Activated CD4-positive, alpha-beta T cell treated with anti-CD3 and anti-CD28 coated beads, Interleukin-2, amount 10 ng/mL, durations not matched to agents 24 days and 14 days (primary cell): ENCODE measurements at regions of chr3 and their contacts with region 1.

Region 1: DNA sequence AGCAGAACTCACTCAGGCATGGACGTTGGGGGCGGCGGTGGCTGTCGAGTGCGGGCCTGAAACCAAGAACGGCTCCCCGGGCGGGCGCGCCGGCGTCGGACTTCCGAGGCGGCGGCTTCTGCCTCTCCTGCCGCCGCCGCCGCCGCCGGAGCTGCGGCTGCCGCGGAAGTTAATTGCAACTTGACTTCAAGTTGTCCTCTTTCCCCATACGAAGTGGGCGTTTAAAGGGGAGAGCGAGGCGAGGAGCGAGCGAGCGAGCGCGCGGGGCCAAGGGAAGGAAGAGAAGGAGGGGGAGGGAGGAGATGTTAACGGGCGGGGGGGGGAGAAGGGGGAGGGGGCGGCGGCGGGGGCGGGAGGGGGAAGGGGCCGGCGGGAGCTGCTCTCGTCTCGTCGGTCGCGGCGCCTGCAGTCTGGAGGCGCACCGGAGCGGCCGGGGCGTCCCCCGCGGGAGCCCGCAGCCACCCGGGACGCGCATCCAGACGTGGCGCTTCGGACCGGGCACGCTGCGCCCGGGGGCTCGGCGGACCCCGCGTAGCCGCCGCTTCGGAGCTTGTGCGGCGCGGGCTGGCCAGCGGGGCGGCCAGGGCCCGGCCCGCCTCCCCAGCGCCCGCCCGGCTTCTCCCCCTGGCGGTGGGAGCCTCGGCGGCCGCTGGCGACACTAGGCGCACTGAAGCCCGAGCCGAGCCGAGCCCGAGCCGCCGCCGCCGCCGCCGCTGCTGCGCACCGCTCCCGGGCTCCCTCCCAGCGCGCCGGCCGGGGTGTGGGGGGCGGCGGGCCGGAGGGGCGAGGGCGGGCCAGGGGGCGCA is 19.7 kb upstream of the SATB1 start:
- DNase-seq: peak; percentile 94
- H3K4me3 Mint-ChIP-seq: peak overlapping the region; percentile 96
- H3K27ac Mint-ChIP-seq: peak overlapping the region; percentile 99
- H3K4me1 Mint-ChIP-seq: peaks cover 27% of the 10 kb centered on the region
- H3K27me3 Mint-ChIP-seq: no peaks in the 10 kb centered on the region

Region 2: GRCh38 chr3:18424729-18425640 is 19.8 kb before region 1 on chr3 and contains the start of gene SATB1:
- intact Hi-C with region 1: loop called (anchors 1 kb)
- DNase-seq: peak; percentile 91
- H3K4me3 Mint-ChIP-seq: peak within 1 kb of the TSS; percentile 83
- H3K27ac Mint-ChIP-seq: peak within 1 kb of the TSS; percentile 98
- H3K4me1 Mint-ChIP-seq: peaks cover 55% of the 10 kb centered on the region
- H3K27me3 Mint-ChIP-seq: peaks cover 2% of the 10 kb centered on the region
- total RNA-seq, gene SATB1: 561 and 571 TPM in 2 replicates

Region 3: GRCh38 chr3:18494251-18494650 is 49.5 kb after region 1 on chr3:
- intact Hi-C with region 1: no loop called
- DNase-seq: no peak
- H3K4me3 Mint-ChIP-seq: no peak overlapping the region
- H3K27ac Mint-ChIP-seq: no peak overlapping the region
- H3K4me1 Mint-ChIP-seq: peaks cover 22% of the 10 kb centered on the region
- H3K27me3 Mint-ChIP-seq: no peaks in the 10 kb centered on the region

Region 4: DNA sequence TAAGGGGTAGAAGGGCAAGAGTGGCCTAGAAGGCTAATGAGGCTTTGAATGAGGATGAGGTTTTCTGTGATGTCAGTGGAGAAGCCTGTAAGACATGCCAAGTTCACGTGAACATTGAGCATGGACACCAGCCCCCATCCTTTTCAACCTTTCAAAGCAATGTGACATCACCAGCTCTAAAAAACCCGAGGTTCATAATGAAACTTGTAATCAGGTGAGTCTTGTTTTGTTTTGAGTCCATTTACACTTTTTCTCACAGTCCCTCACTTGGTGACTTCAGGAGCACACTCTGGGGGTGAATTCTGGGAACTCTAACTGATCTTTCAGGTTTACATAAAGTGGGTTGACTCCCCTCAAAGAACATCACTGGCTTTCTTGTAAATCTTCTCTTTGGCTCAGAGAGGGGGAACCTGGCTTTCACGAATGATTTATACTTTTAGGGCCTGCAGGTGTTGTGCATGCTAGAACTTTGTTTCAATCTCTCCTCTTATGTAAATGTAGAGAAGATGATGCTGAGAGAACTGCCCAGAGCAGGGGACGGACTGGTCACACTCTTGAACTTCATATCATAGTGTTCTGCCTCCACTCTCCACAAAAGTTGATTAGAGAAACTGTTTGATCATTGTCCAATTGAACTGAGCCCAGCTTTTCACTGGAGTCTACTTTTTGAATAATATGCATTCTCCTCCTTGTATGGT is 205.0 kb after region 1 on chr3:
- intact Hi-C with region 1: loop called (anchors 2 kb)
- DNase-seq: peak; percentile 89
- H3K4me3 Mint-ChIP-seq: peak overlapping the region; percentile 61
- H3K27ac Mint-ChIP-seq: peak overlapping the region; percentile 93
- H3K4me1 Mint-ChIP-seq: peaks cover 73% of the 10 kb centered on the region
- H3K27me3 Mint-ChIP-seq: no peaks in the 10 kb centered on the region

Region 5: DNA sequence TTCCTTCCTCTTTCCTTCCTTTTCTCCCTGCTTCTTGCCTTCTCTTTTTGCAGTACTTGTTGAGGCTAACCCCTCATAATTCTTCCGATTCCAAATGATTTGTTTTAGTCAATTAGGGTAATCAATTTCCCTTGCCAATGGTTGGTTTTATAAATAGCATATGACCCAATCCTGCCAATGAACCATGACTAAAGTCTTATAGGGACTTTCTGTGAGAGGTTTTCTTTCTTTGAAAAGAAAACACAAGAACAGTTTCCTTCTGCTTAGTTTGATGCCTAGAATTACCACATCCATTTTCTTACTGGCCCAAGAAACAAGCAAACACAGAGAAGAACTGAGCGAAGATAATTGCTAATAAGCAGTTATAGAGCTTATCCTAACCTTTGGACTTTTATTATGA is 272.8 kb after region 1 on chr3:
- intact Hi-C with region 1: loop called (anchors 1 kb)
- DNase-seq: peak; percentile 64
- H3K4me3 Mint-ChIP-seq: peak overlapping the region; percentile 56
- H3K27ac Mint-ChIP-seq: peak overlapping the region; percentile 95
- H3K4me1 Mint-ChIP-seq: peaks cover 56% of the 10 kb centered on the region
- H3K27me3 Mint-ChIP-seq: no peaks in the 10 kb centered on the region

Region 6: GRCh38 chr3:18872466-18872865 is 427.7 kb after region 1 on chr3:
- intact Hi-C with region 1: loop called (anchors 5 kb)
- DNase-seq: no peak
- H3K4me3 Mint-ChIP-seq: no peak overlapping the region
- H3K27ac Mint-ChIP-seq: no peak overlapping the region
- H3K4me1 Mint-ChIP-seq: peaks cover 32% of the 10 kb centered on the region
- H3K27me3 Mint-ChIP-seq: no peaks in the 10 kb centered on the region